ENCODE measurements at regions of chr20 and their contacts with region 1.

Region 1: GRCh38 chr20:5950271-5951031 is at the starts of genes MCM8 and TRMT6:
- DNase-seq: peak; percentile 97
- H3K4me3 ChIP-seq: peak within 1 kb of the TSS; percentile 66 to 86 (median 74)
- H3K27ac ChIP-seq: peak within 1 kb of the TSS; percentile 68 to 90 (median 87)
- H3K4me1 ChIP-seq: peaks cover 9 to 23% (median 17%) of the 10 kb centered on the region in 4 donors
- H3K27me3 ChIP-seq: no peaks in the 10 kb centered on the region
- CTCF ChIP-seq: no peak
- EP300 ChIP-seq: no peak
- POLR2A ChIP-seq: peak; percentile 38
- total RNA-seq, gene MCM8: 2.6 to 8.6 (median 4.7) TPM
- total RNA-seq, gene TRMT6: 1.00 to 9.4 (median 4.3) TPM

Region 2: GRCh38 chr20:5770987-5771318 is 179.5 kb before region 1 on chr20:
- in situ Hi-C with region 1: no loop called
- intact Hi-C with region 1: no loop called
- DNase-seq: no peak
- H3K4me3 ChIP-seq: no peak overlapping the region
- H3K27ac ChIP-seq: no peak overlapping the region
- H3K4me1 ChIP-seq: no peaks in the 10 kb centered on the region
- H3K27me3 ChIP-seq: no peaks in the 10 kb centered on the region
- CTCF ChIP-seq: no peak
- EP300 ChIP-seq: no peak
- POLR2A ChIP-seq: no peak

Region 3: GRCh38 chr20:5996765-5997164 is 46.3 kb after region 1 on chr20:
- in situ Hi-C with region 1: loop called in 1 of 4 experiments (anchors 10 kb)
- intact Hi-C with region 1: no loop called
- DNase-seq: peak; percentile 22
- H3K4me3 ChIP-seq: no peak overlapping the region
- H3K27ac ChIP-seq: no peak overlapping the region
- H3K4me1 ChIP-seq: peaks cover 0 to under 1% (median 0%) of the 10 kb centered on the region in 4 donors
- H3K27me3 ChIP-seq: no peaks in the 10 kb centered on the region
- CTCF ChIP-seq: peak in 3 of 5 experiments; percentile 13 to 27 (median 20)
- EP300 ChIP-seq: no peak
- POLR2A ChIP-seq: no peak

Region 4: DNA sequence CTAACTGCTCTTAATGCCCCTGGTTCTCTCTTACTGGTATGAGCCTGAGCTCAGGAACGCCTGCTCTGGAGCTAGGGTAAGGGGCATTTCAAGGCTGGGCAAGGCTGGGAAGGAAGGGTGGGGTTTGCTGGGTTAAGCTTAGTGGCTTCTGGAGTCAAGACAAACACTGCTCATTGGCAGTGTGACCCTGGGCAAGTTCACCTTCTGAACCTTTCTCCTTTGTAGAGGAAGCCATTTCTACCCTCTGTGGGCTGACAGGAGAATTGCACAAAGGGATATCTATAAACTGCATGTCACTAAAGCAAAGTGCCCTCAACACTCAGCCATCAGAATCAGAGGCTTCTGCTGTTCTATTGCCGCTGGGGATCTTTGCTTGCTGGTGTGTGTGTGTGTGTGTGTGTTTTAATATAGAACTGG is 123.7 kb after region 1 on chr20:
- in situ Hi-C with region 1: no loop called
- intact Hi-C with region 1: loop called (anchors 10 kb)
- DNase-seq: no peak
- H3K4me3 ChIP-seq: no peak overlapping the region
- H3K27ac ChIP-seq: no peak overlapping the region
- H3K4me1 ChIP-seq: no peaks in the 10 kb centered on the region
- H3K27me3 ChIP-seq: no peaks in the 10 kb centered on the region
- CTCF ChIP-seq: peak in 2 of 5 experiments; percentile 7 to 23
- EP300 ChIP-seq: no peak
- POLR2A ChIP-seq: no peak